ENCODE measurements at regions of chr3 and their contacts with region 1.

Region 1: DNA sequence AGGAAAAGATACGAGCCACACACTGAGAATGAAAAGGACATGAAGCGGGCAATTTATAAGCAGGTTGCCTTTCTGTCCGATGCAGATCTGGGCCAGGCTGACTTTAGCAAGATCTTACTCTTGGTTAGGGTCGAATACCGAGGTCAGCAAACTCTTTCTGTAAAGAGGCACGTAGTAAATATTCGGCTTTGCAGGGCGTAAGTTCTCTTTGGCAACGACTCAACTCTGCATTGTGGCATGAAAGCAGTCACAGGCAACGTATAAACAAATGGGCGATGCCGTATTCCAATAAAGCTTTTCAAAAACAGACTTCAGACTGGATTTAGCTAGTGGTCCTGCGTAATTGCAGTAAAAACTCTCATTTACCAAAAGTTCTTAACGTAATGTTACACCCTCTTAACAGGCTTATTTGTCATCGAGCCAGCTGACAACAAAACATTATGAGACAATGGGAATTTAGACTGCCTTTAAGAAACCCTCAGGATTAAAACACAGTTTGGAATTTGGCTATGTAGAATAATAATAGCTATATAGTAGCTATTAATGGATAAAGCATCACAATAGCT is 13.1 kb upstream of the RPL35A start:
- DNase-seq: no peak
- H3K4me3 ChIP-seq: no peak overlapping the region
- H3K27ac ChIP-seq: no peak overlapping the region
- H3K4me1 ChIP-seq: no peaks in the 10 kb centered on the region
- H3K27me3 ChIP-seq: no peaks in the 10 kb centered on the region
- CTCF ChIP-seq: no peak

Region 2: DNA sequence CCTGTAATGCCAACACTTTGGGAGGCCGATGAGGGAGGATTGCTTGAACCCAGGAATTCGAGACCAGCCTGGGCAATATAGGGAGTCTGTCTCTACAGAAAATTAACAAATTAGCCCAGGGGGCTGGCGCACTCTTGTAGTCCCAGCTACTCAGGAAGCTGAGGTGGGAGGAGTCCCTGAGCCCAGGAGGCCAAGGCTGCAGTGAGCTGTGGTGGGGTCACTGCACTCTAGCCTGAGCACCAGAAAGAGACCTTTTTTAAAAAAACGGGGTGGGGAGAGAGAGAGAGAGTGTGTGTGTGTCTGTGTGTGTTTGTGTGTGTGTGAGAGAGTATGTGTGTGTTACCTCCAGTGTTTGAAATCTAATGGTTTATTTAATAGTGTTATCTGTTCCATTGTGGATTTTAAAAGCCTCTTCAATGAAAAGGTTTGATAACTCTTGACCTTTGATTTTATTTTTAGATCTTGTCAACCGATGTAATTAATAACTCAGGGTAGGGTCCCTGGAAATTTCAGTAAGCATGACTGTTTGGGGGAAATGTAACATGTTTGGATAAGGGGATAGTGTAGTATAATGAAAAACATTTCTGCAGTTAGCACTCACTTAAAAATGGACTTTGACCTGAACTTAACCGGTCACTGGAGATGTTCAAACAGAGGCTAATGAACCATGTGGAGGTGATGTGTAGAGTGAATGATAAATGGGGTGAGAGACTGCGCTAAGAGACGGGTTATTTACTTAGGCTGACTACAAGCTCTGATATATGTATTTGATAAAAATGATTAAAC is 116.2 kb before region 1 on chr3:
- CTCF ChIA-PET with region 1: no interaction called
- dilution Hi-C with region 1: no loop called
- in situ Hi-C with region 1: no loop called
- intact Hi-C with region 1: no loop called
- DNase-seq: no peak
- H3K4me3 ChIP-seq: no peak overlapping the region
- H3K27ac ChIP-seq: no peak overlapping the region
- H3K4me1 ChIP-seq: no peaks in the 10 kb centered on the region
- H3K27me3 ChIP-seq: no peaks in the 10 kb centered on the region
- CTCF ChIP-seq: no peak

Region 3: DNA sequence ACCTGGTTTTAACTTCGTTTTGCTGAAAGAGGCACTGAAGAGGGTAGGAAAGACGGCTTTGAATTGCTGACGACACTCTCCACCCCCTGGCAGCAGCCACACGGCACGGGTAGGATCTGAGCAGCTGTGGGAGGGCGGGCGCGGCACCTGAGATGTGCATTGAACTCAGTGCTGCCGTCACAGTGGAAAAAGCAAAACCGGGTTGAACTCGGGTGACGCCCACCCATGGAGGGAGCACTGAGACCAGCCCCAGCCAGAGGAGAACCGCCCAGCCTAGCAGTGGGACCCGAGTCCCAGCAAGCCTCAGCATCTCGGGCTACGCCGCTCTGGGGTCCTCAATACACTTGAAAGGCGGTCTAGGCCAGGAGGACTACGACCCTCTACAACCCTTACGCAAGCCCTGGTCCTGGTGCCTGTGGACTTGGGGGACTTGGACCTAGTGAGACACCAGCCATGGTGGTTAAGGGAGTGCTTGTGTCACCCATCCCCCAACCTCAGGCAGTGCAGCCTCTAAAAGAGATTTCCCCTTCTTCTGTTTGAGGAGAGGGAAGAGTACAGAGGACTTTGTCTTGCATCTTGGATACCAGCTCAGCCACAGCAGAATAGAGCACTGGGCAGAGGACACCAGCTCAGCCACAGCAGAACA is 36.9 kb before region 1 on chr3:
- CTCF ChIA-PET with region 1: no interaction called
- dilution Hi-C with region 1: loop called (anchors 5 kb)
- in situ Hi-C with region 1: no loop called
- intact Hi-C with region 1: no loop called
- DNase-seq: no peak
- H3K4me3 ChIP-seq: no peak overlapping the region
- H3K27ac ChIP-seq: no peak overlapping the region
- H3K4me1 ChIP-seq: no peaks in the 10 kb centered on the region
- H3K27me3 ChIP-seq: no peaks in the 10 kb centered on the region
- CTCF ChIP-seq: no peak